GM10248 (cell line): ENCODE measurements at regions of chr2 and their contacts with region 1.

Region 1: DNA sequence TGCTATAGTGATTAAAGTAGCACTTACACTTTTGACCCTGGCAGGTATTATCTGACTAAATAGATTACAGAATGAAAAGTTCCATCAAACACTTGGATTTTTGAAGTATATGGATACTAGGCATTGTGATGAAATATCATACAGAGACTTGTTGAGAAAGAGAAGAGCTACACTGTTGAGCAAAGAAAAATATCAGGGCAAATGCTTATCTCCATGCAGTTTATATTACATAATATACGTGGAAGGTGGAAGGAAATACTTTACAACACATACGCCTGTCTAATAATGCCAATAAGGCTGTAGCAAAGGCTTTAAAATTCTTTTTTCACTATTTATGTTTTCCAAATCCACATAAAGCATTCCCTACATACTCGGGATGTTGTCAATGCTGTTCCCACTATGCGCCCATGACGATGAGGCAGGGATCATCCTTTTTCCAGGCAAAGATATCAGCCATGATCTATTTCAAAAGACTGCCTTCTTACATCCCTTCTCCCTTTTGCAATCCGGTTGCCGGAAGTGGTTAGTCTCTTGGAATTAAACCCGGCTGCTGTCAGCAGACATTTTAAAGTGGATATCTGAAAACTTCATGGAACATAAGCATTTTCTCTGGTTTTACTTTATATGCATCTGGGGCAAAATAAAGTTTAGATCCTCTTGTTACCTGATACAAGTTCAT is 92.6 kb upstream of the ITGA4 start:
- DNase-seq: no peak
- CTCF ChIP-seq: no peak

Region 2: GRCh38 chr2:181374781-181375675 is 10.4 kb after region 1 on chr2:
- CTCF ChIA-PET with region 1: interaction called, 17 read pairs
- POLR2A ChIA-PET with region 1: no interaction called
- DNase-seq: peak; percentile 29
- CTCF ChIP-seq: no peak

Region 3: DNA sequence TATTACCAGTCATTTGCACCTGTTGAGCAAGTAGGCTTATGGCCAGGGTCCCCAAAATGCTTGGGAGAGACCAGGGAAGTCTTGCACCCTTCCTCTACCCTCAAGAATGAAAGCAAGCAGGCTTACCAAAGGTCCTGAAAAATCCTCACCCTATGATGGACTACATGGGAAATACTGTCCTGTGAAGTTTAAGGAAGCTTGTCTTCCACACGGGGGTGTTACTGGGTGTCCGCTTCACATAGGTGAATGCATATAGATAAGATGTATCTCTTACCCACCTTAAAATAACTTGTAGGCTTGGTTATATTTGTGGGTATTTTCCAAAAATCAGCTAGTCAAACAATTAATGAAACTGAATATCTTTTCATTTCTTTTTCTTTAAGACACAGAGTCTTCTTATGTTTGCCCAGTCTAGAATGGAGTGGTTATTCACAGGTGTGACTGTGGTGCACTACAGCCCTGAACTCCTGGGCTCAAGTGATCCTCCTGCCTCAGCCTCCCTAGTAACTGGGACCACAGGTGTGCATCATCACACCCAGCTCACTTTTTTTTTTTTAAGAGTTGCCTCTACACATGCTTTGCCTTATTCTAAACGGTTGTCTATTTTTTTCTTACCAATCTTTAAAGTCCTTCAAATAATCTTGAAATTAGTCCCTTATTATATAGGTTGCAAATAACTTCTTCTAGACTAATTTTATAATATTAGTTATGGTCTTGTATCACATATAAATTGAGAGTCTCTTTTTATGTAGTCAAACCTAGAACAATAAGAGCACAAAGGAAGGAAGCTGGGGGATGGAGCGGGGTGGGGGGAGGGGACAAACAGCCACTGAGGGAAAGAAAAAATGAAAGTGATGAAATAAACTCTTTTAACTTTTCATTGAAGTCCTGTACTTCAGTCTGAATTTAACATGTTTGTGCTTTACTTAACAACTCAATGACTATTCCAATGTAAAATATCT is 243.3 kb after region 1 on chr2:
- CTCF ChIA-PET with region 1: no interaction called
- POLR2A ChIA-PET with region 1: no interaction called
- DNase-seq: no peak
- CTCF ChIP-seq: no peak

Region 4: DNA sequence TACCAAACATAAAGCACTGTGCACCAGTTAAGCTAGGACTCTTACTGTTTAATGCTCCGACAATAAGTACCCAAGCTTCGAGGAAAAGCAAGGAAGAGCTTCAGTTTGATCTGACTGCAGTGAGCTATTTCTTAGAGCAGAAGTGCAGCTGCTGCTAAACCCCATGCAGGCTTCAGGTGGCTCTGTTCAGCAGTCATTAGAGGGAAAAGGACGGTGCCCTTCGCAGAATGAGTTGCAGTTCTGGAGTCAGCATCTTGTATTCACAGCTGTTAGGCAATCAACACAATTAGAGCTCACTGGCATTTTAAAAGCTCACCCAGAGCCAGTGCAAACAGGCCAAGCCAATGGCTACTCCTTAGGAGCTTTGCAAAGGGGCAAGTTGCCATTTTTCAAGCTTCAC is 293.8 kb after region 1 on chr2:
- CTCF ChIA-PET with region 1: no interaction called
- POLR2A ChIA-PET with region 1: no interaction called
- DNase-seq: no peak
- CTCF ChIP-seq: no peak